PC-9 (cell line): ENCODE measurements at regions of chr17 and their contacts with region 1.

Region 1: GRCh38 chr17:9968902-9969617 is 64.0 kb upstream of the RCVRN start:
- DNase-seq: peak in 1 of 2 experiments; percentile 40
- H3K4me3 ChIP-seq: no peak overlapping the region
- H3K27ac ChIP-seq: no peak overlapping the region
- H3K4me1 ChIP-seq: no peaks in the 10 kb centered on the region
- H3K27me3 ChIP-seq: peaks cover 66% of the 10 kb centered on the region
- CTCF ChIP-seq: no peak

Region 2: GRCh38 chr17:9104370-9105041 is 864.6 kb before region 1 on chr17:
- CTCF ChIA-PET with region 1: no interaction called
- POLR2A ChIA-PET with region 1: no interaction called
- intact Hi-C with region 1: no loop called
- DNase-seq: no peak
- H3K4me3 ChIP-seq: no peak overlapping the region
- H3K27ac ChIP-seq: no peak overlapping the region
- H3K4me1 ChIP-seq: no peaks in the 10 kb centered on the region
- H3K27me3 ChIP-seq: no peaks in the 10 kb centered on the region
- CTCF ChIP-seq: no peak

Region 3: GRCh38 chr17:9982159-9982558 is 13.1 kb after region 1 on chr17:
- CTCF ChIA-PET with region 1: interaction called, 14 read pairs
- POLR2A ChIA-PET with region 1: no interaction called
- intact Hi-C with region 1: no loop called
- DNase-seq: peak in 1 of 2 experiments; percentile 25
- H3K4me3 ChIP-seq: no peak overlapping the region
- H3K27ac ChIP-seq: no peak overlapping the region
- H3K4me1 ChIP-seq: no peaks in the 10 kb centered on the region
- H3K27me3 ChIP-seq: peaks cover 57% of the 10 kb centered on the region
- CTCF ChIP-seq: peak; percentile 54

Region 4: DNA sequence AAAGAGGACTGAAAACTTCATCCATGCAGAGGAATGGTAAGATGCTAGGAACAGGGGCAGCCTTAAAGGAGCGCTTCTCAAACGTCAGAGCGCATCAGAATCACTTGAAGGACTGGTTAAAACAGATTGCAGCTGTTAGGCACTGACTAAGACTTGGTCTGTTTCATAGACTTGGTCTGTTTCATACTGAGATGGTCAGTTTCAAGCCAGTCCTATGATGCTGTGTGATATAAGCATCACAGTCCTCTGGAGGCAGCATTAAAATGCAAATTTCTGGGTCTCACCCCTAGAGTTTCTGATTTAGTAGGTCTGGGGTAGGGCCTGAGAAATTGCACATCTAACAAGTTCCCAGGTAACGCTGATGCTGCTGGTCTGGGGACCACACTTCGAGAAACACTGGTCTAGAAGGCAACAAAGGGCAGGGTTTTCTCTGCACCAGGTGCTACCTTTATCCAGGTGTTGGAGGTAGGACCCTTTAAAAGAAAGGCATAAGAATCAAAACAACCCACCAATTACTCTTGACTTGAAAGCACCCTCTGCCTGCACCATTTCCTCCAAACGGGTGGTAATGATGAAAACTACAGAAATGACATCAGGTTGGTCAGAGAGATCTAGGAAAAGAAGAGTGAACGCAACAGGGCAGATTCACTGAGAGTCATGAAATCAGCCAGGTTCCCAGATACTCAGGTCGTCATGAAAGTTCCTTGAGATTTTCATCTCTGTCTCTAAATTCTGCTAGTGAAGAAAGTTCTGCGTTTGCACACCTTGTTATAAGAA is 31.0 kb after region 1 on chr17:
- CTCF ChIA-PET with region 1: no interaction called
- POLR2A ChIA-PET with region 1: no interaction called
- intact Hi-C with region 1: no loop called
- DNase-seq: no peak
- H3K4me3 ChIP-seq: no peak overlapping the region
- H3K27ac ChIP-seq: no peak overlapping the region
- H3K4me1 ChIP-seq: no peaks in the 10 kb centered on the region
- H3K27me3 ChIP-seq: peaks cover 44% of the 10 kb centered on the region
- CTCF ChIP-seq: no peak

Region 5: DNA sequence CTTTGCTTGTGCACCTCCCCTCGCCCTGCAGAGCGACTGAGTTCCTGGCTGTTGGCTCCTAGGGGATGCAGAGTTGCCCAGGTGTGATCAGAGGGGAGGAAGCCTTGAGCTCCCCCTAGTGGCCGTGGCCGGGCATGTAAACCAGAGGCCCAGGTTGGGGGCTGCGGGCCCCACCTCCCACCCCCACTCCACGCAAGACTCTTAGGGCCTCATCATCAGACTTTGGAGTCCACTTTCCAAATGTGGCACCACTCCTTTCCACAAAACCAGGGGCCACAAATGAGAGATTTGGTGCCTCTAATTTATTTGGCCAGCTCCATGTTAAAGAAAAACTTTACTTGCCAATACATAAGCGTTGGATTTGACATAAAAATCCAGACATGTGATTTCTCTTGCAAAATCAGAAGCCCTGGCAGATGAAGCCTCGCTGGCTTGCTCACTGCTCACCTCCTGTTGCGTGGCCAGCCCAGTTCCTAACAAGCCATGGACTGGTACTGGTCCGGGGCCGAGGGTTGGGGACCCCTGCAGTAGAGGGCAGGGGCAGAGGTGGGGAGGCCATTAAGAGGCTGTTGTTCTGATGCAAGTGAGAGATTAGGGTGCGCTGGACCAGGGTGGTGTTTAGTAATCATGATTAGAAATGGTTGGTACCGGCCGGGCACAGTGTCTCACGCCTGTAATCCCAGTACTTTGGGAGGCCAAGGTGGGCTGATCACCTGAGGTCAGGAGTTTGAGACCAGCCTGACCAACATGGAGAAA is 258.0 kb after region 1 on chr17:
- CTCF ChIA-PET with region 1: no interaction called
- POLR2A ChIA-PET with region 1: no interaction called
- intact Hi-C with region 1: loop called (anchors 5 kb)
- DNase-seq: peak in 1 of 2 experiments; percentile 30
- H3K4me3 ChIP-seq: no peak overlapping the region
- H3K27ac ChIP-seq: no peak overlapping the region
- H3K4me1 ChIP-seq: no peaks in the 10 kb centered on the region
- H3K27me3 ChIP-seq: peaks cover 3% of the 10 kb centered on the region; the same call in 1 of the 2 replicates
- CTCF ChIP-seq: peak; percentile 75